Left cardiac atrium (tissue), 4 donors: ENCODE measurements at regions of chr11 and their contacts with region 1.

Region 1: GRCh38 chr11:11931461-11932055 is 76.9 kb downstream of the DKK3 start:
- DNase-seq: no peak
- ATAC-seq: peak; percentile 80 to 82

Region 2: DNA sequence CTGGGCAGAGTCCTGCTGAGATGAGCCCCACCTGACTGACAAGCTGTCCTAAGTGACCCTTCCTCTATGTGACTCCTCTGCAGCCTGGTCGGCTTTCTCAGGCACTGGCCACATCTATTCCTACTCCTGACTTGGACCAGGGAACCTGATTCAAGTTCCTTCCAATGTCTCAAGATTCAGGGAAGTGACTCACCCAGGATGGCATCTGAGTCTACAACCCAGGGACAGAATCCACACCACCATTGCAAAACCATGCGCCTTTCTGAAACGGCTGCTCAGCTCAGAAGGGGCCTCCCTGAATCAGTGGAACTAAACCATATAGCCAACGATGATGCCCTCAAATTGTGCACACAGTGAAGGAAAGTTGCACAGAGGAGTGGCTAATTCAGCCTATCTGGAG is 514.6 kb before region 1 on chr11:
- intact Hi-C with region 1: no loop called
- DNase-seq: no peak
- ATAC-seq: peak in 1 of 2 donors; percentile 10

Region 3: DNA sequence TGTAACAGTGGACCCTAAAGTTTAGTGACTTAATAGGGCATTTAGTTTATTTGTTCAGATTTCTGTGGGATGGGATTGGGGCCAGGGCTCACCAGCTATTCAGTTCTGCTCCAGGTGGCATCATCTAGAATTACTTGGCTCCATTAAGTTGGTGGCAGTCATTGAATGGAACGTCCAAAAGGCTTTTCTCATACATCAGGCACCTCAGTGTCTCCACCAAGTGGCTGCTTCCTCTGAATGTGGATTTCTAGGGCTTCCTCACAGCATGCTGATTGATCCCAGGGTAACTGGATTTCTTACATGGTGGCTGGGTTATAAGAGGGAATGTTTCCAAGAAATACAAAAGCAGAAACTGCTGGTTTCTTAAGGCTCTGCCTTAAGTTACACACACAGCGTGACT is 55.1 kb before region 1 on chr11:
- intact Hi-C with region 1: no loop called
- DNase-seq: no peak
- ATAC-seq: no peak

Region 4: DNA sequence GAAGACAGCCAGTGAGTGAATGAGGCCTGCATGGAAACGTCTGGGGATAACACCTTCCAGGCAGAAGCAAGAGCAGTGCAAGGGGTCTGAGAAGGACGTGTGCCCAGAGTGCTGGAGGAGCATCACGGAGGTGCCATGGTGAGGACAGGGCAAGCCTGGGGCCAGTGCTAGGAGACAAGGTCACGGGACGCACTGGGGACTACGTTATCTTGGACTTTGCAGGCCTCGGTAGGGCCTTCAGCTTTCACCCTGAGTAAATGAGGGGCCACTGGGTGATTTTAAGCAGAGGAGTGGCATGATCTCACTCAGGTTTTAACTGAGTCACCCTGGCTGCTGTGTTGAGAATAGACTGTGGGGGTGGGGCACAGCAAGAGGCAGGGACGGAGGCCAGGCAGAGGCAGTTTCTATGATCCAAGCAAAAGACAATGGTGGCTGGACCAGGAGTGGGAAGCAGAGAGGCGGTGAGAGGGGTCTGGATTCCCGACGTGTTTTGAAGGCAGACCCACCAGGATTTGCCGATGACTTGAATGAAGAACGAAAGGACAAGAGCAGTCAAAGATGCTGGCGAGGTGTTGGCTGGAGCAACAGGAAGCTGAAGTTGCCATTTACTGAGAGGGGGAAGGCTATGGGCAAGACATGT is 343.1 kb after region 1 on chr11:
- intact Hi-C with region 1: loop called (anchors 10 kb)
- DNase-seq: no peak
- ATAC-seq: peak in 1 of 2 donors; percentile 10